H1 (cell line): ENCODE measurements at regions of chr11 and their contacts with region 1.

Region 1: DNA sequence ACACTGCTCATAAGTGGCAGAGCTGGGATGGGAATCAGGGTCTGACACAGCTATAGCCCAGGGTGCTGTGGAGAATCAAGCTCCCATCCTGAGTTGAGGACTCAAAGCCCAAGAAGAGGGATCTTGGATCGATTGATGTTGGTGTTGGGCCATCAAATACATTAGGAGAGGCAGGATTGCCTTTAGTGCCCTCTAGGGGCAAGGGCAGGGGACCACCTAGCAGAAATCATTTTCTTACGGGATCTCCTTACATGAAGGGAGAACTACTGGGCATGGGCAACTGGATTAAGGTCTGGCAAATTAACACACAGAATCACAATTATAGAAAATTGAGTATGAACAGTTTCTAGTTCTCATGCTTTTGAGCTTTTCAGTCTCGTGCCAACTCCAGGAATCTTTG is 24.9 kb upstream of the EMSY start:
- DNase-seq: peak in 1 of 2 experiments; percentile 55
- H3K4me3 ChIP-seq: no peak overlapping the region
- H3K27ac ChIP-seq: no peak overlapping the region
- H3K4me1 ChIP-seq: no peaks in the 10 kb centered on the region
- H3K27me3 ChIP-seq: no peaks in the 10 kb centered on the region; a peak in 1 of 7 replicates
- CTCF ChIP-seq: peak; percentile 51 to 80 (median 70)
- EP300 ChIP-seq: no peak
- POLR2A ChIP-seq: no peak
- RAD21 ChIP-seq: peak; percentile 61 to 71

Region 2: DNA sequence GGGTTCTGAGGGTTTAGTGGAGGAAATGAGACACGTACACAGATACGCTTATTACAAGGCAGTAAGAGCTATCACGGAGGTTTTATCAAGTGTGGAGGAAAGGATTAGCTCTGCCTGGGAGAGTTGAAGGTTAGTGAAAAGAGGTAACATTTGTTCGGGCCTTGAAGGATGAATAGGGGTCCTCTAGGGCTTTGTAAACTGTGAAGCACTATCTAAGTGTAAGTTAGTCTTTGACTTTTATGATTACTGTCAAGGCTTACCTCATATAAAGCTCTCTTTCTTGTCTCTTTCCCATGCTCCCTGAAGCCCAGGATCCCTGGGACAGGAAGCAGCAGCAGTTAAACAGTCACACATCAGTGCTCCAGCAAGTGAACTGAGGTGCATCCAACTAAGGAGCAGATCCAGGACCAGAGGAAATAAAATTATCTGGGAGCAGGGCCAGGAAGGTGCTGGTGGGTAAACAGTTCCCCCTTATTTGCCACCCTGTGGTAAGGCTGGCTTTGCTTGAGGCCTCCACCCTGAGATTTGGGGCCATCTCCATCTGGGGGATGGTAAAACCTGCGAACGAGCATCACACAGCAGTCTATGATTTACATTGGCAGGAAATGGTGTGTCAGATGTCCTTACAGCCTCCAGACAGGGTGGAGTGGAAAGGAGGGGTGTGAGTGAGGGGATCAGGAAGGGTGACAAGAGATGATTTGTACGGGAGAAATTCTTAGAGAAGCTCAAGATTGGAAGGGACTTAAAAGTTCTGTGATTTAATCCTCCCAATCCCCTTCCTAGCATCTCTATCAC is 11.5 kb before region 1 on chr11:
- CTCF ChIA-PET with region 1: interaction called, 29 read pairs
- POLR2A ChIA-PET with region 1: interaction called, 3 read pairs
- DNase-seq: no peak
- H3K4me3 ChIP-seq: no peak overlapping the region
- H3K27ac ChIP-seq: no peak overlapping the region
- H3K4me1 ChIP-seq: no peaks in the 10 kb centered on the region
- H3K27me3 ChIP-seq: no peaks in the 10 kb centered on the region; a peak in 1 of 7 replicates
- CTCF ChIP-seq: no peak
- EP300 ChIP-seq: no peak
- POLR2A ChIP-seq: no peak
- RAD21 ChIP-seq: no peak

Region 3: DNA sequence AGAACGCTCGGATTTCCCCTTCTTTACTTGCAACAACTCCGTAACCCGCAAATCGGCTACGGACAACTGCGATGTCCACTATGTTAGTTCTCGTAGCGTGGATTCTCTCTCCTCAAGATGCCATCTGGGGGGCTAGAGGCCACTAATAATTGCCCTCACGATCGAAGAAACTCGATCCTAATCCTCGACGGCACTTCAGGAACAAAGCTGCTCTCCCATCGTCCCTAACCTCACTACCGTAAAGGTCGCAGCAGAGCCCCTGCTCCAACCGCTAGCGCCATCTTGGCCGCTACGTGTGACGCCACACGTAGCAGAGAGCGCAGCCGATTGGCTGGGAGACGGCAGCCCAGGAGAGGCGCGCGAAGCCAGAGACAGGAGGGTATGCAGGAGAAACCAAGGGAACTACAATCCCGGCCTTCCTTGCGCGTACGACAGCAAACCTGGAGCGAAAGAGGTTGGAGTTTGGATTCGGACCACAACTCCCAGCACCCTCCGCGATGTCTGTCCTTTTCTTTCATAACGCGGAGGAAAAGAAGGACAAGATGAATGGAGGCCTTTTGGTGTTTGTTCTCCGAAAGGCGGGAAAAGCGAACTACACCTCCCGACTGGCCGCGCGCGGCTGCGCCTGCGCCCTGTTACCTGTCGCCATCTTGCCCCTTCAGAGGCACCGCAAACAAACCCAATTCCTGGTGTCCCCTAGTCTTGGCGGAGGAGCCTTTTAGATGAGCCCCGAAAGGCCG is 24.7 kb after region 1 on chr11 and contains the start of gene EMSY:
- CTCF ChIA-PET with region 1: interaction called, 31 read pairs
- POLR2A ChIA-PET with region 1: interaction called, 5 read pairs
- DNase-seq: peak; percentile 89 to 98
- H3K4me3 ChIP-seq: peak within 1 kb of the TSS; percentile 77 to 99 (median 96)
- H3K27ac ChIP-seq: peak within 1 kb of the TSS; percentile 98
- H3K4me1 ChIP-seq: peaks cover 0 to 20% (median 1%) of the 10 kb centered on the region in 4 experiments; a peak in 5 of 7 replicates
- H3K27me3 ChIP-seq: no peaks in the 10 kb centered on the region
- CTCF ChIP-seq: no peak
- EP300 ChIP-seq: no peak
- POLR2A ChIP-seq: peak; percentile 98
- RAD21 ChIP-seq: no peak
- total RNA-seq, gene EMSY: 32.2 and 34.6 TPM in 2 replicates